ENCODE measurements at regions of chr5 and their contacts with region 1.

Region 1: DNA sequence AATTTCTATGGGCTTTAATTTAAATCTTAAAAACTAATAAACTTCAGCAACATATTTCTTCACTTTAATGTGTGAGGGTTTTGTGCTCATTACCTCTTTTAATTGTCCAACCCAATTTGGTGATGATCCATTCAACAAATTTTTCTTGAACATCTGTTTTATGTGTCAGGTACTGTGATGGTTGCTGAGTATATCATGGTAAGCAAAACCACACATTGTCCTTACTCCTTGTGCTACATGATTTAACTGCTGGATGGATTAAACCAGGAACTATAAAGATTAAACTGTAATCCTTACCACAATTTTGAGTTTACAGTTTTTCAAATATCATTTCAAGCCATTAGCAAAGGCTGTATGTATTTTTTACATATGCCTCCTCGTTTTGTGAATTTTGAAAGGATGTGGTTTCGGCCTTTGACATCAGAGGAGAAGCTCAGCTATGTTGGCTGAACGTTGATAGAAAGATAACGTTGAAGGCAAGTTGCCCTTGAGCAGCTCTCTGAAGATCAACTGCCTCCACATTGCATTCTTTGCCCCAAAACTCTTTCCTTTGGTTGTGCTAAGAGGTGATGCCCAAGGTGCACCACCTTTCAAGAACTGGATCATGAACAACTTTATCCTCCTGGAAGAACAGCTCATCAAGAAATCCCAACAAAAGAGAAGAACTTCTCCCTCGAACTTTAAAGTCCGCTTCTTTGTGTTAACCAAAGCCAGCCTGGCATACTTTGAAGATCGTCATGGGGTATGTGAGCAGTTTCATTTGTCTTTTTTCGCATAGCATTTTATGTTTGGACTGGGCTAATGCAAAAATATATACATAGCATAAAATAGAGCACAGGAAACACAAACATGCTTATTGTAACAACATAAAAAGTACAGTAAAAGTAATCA is at the start of gene ITK:
- DNase-seq: no peak
- ATAC-seq: peak; percentile 74
- H3K4me3 Mint-ChIP-seq: peak within 1 kb of the TSS; percentile 96
- H3K27ac Mint-ChIP-seq: peak within 1 kb of the TSS; percentile 99
- H3K4me1 Mint-ChIP-seq: peaks cover 41% of the 10 kb centered on the region
- H3K27me3 Mint-ChIP-seq: no peaks in the 10 kb centered on the region
- total RNA-seq, gene ITK: 313 to 324 TPM

Region 2: DNA sequence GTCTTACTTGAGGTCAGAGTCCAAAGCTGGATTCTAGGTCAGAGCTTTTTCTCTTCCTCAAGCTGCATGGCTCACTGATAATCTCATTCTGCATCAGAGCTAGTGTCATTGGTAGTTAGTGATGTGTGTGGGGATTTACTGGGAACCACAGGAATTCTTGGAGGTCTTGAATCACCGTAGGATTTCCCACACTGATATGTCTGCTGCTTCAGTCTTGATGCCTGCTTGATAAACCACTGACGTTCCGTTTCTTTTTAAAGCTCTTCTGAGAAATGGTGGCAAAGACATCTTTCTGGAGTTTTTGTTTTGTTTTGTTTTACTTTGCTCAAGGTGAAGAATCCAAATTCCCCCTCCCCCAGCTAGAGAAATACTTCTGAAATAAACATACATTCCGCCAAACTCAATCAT is 13.4 kb before region 1 on chr5:
- POLR2A ChIA-PET with region 1: interaction called, 32 read pairs
- DNase-seq: no peak
- ATAC-seq: peak; percentile 32
- H3K4me3 Mint-ChIP-seq: peak overlapping the region; percentile 75
- H3K27ac Mint-ChIP-seq: peak overlapping the region; percentile 86
- H3K4me1 Mint-ChIP-seq: peaks cover 47% of the 10 kb centered on the region
- H3K27me3 Mint-ChIP-seq: no peaks in the 10 kb centered on the region

Region 3: GRCh38 chr5:157198277-157198986 is 17.8 kb after region 1 on chr5:
- POLR2A ChIA-PET with region 1: interaction called, 116 read pairs
- DNase-seq: peak; percentile 44
- ATAC-seq: peak; percentile 46
- H3K4me3 Mint-ChIP-seq: peak overlapping the region; percentile 67
- H3K27ac Mint-ChIP-seq: peak overlapping the region; percentile 68
- H3K4me1 Mint-ChIP-seq: peaks cover 77% of the 10 kb centered on the region
- H3K27me3 Mint-ChIP-seq: no peaks in the 10 kb centered on the region

Region 4: DNA sequence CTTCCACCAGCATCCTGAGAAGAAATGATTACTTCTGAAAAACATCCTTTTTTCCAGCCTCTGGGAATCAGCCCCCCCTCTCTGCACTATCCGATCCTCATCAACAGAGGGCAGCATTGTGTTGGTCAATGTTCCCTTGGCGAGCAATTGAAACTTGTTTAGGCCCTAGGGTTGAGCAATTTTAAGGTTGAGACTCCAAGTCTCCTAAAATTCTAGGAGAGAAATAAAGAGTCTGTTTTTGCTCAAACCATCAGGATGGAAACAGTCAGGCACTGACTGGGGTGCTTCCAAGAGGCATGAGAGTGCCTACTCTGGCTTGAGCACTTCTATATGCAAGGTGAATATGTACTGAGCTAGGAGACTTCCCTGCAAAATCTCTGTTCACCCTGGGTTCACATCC is 72.9 kb after region 1 on chr5:
- POLR2A ChIA-PET with region 1: interaction called, 18 read pairs
- DNase-seq: no peak
- ATAC-seq: no peak
- H3K4me3 Mint-ChIP-seq: peak overlapping the region; percentile 60
- H3K27ac Mint-ChIP-seq: peak overlapping the region; percentile 88
- H3K4me1 Mint-ChIP-seq: peaks cover 87% of the 10 kb centered on the region
- H3K27me3 Mint-ChIP-seq: no peaks in the 10 kb centered on the region

Region 5: GRCh38 chr5:157265714-157266285 is 85.2 kb after region 1 on chr5 and contains the start of gene CYFIP2:
- POLR2A ChIA-PET with region 1: interaction called, 16 read pairs
- DNase-seq: peak; percentile 91
- ATAC-seq: peak; percentile 80
- H3K4me3 Mint-ChIP-seq: peak within 1 kb of the TSS; percentile 93
- H3K27ac Mint-ChIP-seq: peak within 1 kb of the TSS; percentile 95
- H3K4me1 Mint-ChIP-seq: peaks cover 66% of the 10 kb centered on the region
- H3K27me3 Mint-ChIP-seq: no peaks in the 10 kb centered on the region
- total RNA-seq, gene CYFIP2: 458 to 480 TPM

Region 6: DNA sequence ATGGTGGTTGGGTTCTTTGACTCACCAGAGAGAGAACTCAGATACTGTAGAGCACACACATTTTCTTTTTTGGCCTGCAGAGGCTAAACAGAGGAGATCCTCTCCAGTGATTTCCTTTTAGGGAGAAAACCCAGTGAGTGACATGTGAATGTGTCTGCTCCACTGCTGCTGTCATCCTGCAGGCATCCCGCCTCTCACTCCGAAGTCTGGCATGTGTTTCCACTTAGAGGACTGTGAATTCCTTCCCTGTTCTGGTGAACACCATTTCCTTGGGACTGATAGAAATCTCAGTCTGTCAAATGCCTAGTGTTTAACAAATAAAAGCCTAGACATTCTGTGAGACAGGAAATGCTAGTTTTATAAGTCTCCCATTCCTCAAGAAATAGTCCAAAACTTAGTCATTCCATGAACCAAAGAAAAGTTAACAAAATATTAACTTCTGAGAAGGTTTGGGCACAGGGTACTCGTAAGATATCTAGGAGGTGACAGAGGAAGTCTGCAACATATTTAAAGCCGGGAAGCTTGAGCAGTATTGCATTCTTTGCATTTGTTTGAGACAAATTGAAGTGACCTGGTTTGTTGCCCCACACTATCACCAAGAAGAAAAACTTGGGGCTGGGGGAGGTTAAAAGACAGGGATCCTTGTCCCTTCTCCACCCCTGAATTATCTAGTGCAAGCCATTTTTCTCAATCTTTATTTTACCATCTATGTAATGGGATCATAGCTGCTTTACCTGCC is 204.5 kb after region 1 on chr5:
- POLR2A ChIA-PET with region 1: no interaction called
- DNase-seq: no peak
- ATAC-seq: no peak
- H3K4me3 Mint-ChIP-seq: no peak overlapping the region
- H3K27ac Mint-ChIP-seq: no peak overlapping the region
- H3K4me1 Mint-ChIP-seq: peaks cover 6% of the 10 kb centered on the region
- H3K27me3 Mint-ChIP-seq: no peaks in the 10 kb centered on the region